ENCODE measurements at regions of chr17 and their contacts with region 1.

Region 1: DNA sequence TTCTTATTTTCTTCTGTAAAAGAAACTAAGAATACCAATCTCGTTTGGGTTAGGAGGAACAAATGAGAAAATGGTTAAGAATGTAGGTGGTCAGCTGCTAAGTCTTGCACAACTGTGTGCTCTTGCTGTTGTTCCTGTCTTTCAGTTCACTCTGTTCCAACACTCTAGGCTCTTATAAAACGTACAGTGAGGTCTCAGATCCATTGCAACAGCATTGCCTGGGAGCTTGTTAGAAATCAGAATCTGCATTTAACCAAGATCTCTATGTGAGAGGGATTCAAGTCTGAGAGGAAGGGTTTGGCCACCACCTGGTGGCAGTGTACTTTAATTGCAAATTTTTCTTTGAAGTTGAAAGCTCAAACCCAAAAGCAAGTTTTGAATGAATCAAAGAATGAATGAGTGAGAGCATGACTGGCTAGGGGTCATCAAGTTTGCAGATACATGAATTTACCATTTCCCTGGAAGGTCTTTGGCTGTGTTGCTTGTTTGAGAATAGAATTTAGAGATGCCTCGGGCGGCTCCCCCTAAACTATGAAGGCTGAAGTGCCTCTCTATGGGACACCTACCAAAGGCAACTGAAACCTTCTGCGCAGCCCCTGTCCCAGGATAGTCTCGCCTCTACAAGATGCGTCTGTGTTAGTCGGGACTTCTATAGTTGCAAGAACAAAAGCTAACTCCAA is 2.5 kb downstream of the ALOX15B start:
- DNase-seq: peak; percentile 73
- H3K4me3 ChIP-seq: no peak overlapping the region
- H3K27ac ChIP-seq: peak overlapping the region in 1 of 2 experiments; percentile 53; a peak in 2 of 4 replicates
- H3K4me1 ChIP-seq: peaks cover 5 to 8% of the 10 kb centered on the region in 2 experiments; a peak in 2 of 4 replicates
- H3K27me3 ChIP-seq: peaks cover 6% of the 10 kb centered on the region
- CTCF ChIP-seq: peak; percentile 76
- EP300 ChIP-seq: no peak
- RAD21 ChIP-seq: peak; percentile 86

Region 2: DNA sequence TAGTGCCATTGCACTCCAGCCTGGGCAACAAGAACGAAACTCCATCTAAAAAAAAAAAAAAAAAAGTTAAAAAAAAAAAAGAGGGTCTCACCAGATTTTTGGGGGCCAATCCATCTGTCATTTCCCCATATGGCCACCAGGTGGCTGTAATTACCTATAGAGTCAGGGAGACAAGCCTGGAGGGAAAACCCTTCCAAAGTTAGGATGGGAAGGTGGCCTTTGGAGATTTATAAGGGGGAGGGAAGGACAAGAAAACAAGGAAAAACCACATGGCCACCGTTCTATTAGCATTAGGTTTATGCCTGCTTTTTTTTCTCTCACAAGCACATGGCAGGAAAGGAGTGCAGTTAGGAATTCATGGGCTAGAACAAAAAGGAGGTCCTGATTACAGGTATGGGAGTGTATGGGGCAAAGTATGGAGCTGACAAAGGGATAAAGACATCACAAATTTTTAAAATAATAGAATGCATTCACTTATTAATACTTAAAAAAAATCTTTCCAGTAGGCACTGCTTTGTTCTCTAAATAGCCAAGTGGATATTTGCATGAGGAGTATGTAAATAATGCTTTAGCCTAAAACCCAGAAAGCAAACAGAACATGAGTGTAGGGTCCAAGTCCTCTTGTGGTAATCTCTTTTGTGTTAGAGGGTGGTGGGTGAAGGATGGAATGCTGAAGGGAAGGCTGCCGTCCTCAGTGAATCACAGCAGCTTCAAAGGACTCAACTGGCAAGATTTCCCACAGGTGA is 178.5 kb before region 1 on chr17:
- CTCF ChIA-PET with region 1: interaction called, 37 read pairs
- POLR2A ChIA-PET with region 1: no interaction called
- DNase-seq: peak; percentile 71
- H3K4me3 ChIP-seq: no peak overlapping the region; a peak in 1 of 4 replicates
- H3K27ac ChIP-seq: peak overlapping the region in 1 of 2 experiments; percentile 39; a peak in 1 of 4 replicates
- H3K4me1 ChIP-seq: peaks cover 9 to 19% of the 10 kb centered on the region in 2 experiments; a peak in 2 of 4 replicates
- H3K27me3 ChIP-seq: no peaks in the 10 kb centered on the region
- CTCF ChIP-seq: peak; percentile 87
- EP300 ChIP-seq: no peak
- RAD21 ChIP-seq: peak; percentile 87

Region 3: GRCh38 chr17:7915611-7916382 is 125.6 kb before region 1 on chr17 and contains the start of gene RNF227:
- CTCF ChIA-PET with region 1: interaction called, 48 read pairs
- POLR2A ChIA-PET with region 1: interaction called, 3 read pairs
- DNase-seq: peak; percentile 93
- H3K4me3 ChIP-seq: peak within 1 kb of the TSS; percentile 57 to 62
- H3K27ac ChIP-seq: peak within 1 kb of the TSS; percentile 60 to 90
- H3K4me1 ChIP-seq: peaks cover 14 to 18% of the 10 kb centered on the region in 2 experiments; a peak in 2 of 4 replicates
- H3K27me3 ChIP-seq: no peaks in the 10 kb centered on the region
- CTCF ChIP-seq: no peak
- EP300 ChIP-seq: no peak
- RAD21 ChIP-seq: peak; percentile 11; the same call in 1 of the 2 replicates
- polyA plus RNA-seq, gene RNF227: 7.4 and 9.0 TPM in 2 replicates

Region 4: GRCh38 chr17:7982666-7983065 is 58.7 kb before region 1 on chr17:
- CTCF ChIA-PET with region 1: interaction called, 64 read pairs
- POLR2A ChIA-PET with region 1: no interaction called
- DNase-seq: no peak
- H3K4me3 ChIP-seq: peak overlapping the region in 1 of 2 experiments; percentile 33; a peak in 1 of 4 replicates
- H3K27ac ChIP-seq: peak overlapping the region in 1 of 2 experiments; percentile 59; a peak in 2 of 4 replicates
- H3K4me1 ChIP-seq: no peaks in the 10 kb centered on the region; a peak in 1 of 4 replicates
- H3K27me3 ChIP-seq: no peaks in the 10 kb centered on the region
- CTCF ChIP-seq: peak; percentile 48
- EP300 ChIP-seq: no peak
- RAD21 ChIP-seq: peak; percentile 58

Region 5: DNA sequence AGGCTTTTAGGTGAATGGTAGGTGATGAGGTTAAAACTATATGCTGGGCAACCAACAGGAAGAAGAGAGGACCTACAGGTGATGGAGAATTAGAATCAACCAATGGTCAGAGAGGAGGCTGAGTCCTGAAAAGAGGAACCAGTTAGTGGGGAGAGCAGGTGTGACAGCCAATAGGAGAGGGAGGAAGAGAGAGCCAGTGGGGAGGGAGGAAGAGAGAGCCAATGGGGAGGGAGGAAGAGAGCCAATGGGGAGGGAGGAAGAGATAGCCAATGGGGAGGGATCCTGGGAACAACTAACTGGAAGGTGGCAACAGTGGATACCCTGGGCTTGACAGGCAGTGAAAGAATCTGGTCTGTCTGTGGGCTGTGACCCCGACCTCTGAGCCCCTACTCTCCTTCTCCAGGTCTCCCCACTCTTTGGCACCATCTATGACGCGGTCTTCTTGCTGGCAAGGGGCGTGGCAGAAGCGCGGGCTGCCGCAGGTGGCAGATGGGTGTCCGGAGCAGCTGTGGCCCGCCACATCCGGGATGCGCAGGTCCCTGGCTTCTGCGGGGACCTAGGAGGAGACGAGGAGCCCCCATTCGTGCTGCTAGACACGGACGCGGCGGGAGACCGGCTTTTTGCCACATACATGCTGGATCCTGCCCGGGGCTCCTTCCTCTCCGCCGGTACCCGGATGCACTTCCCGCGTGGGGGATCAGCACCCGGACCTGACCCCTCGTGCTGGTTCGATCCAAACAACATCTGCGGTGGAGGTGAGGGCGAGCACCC is 35.2 kb before region 1 on chr17:
- CTCF ChIA-PET with region 1: interaction called, 27 read pairs
- POLR2A ChIA-PET with region 1: interaction called, 3 read pairs
- DNase-seq: peak; percentile 57
- H3K4me3 ChIP-seq: no peak overlapping the region
- H3K27ac ChIP-seq: no peak overlapping the region
- H3K4me1 ChIP-seq: no peaks in the 10 kb centered on the region
- H3K27me3 ChIP-seq: 0 out of 2 replicates have a peak, but pooled peaks cover 4% of the 10 kb centered on the region
- CTCF ChIP-seq: no peak
- EP300 ChIP-seq: no peak
- RAD21 ChIP-seq: no peak

Region 6: DNA sequence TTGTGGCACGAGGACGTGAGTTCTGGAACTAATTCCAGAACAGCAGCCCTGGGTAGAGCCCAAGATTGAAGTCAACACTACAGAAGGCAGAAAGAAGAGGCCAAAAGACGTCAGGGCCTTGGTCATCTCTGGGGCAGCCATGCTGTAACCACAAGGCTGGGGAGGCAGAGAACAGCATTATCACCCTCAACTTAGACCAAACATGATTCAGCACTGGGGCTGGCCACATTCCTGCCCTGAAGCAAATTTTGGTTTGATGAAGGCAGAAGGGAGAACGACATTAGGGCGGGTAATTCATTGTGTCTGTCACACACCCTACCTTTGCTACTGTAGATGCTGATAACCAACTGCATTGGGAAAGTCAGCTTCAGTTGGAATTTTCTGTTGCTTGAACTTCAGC is 12.3 kb before region 1 on chr17:
- CTCF ChIA-PET with region 1: interaction called, 228 read pairs
- POLR2A ChIA-PET with region 1: interaction called, 3 read pairs
- DNase-seq: no peak
- H3K4me3 ChIP-seq: no peak overlapping the region
- H3K27ac ChIP-seq: no peak overlapping the region
- H3K4me1 ChIP-seq: no peaks in the 10 kb centered on the region
- H3K27me3 ChIP-seq: peaks cover 20% of the 10 kb centered on the region
- CTCF ChIP-seq: no peak
- EP300 ChIP-seq: no peak
- RAD21 ChIP-seq: no peak

Measured in SK-N-SH (cell line).